CD8-positive, alpha-beta memory T cell (primary cell): ENCODE measurements at regions of chr5 and their contacts with region 1.

Region 1: DNA sequence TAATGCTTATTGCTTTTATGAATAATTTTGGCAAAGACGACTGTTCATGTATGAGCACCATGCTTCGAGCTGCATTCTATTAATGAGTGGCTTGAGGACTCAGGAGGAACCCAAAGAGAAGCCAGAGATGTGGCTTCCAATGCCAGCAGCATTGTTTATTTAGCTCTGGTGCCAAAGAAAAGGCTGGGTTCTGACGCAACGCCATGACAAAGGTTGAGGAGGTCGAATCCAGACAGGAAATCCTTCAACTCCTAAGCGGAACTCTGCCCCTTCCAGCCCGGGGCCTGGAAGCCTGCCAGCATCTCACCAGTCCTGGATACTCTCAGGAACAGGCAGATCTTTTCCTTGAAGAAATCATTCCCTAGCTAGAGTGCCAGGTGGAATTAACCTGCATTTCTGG is 104.4 kb downstream of the ARHGAP26 start:
- DNase-seq: no peak
- H3K4me3 ChIP-seq: no peak overlapping the region
- H3K4me3 Mint-ChIP-seq: no peak overlapping the region
- H3K27ac ChIP-seq: no peak overlapping the region
- H3K27ac Mint-ChIP-seq: peak overlapping the region in 1 of 8 donors; percentile 4
- H3K4me1 ChIP-seq: no peaks in the 10 kb centered on the region
- H3K4me1 Mint-ChIP-seq: peaks cover 30 to 35% (median 30%) of the 10 kb centered on the region in 3 donors
- H3K27me3 ChIP-seq: no peaks in the 10 kb centered on the region
- H3K27me3 Mint-ChIP-seq: no peaks in the 10 kb centered on the region

Region 2: DNA sequence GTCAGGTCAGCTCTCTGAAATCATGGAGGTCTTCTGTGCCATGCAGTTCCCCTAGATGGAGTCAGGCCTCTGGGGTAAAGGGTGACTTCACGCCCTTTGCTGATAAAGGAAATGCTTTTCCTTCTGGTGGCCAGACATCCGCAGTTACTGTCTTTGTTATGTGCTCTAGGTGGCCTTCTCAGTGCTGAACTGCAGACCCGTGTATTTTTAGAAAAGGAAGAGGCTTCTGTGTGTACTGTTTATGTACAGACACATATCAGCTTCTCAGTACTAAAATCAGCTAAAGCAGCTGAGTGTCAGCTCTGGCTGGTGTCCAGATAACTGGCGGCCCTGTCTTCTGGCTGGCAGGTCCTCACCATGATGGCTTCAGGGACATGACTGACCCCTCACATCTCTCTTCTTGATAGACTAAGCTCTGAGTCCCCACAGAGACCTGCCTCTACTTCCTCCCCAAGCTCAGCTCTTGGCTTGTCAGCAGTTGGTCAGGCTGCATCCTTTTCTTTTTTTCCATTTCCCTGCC is 29.1 kb before region 1 on chr5:
- CTCF ChIA-PET with region 1: no interaction called
- POLR2A ChIA-PET with region 1: no interaction called
- DNase-seq: peak in 2 of 5 donors; percentile 12 to 38
- H3K4me3 ChIP-seq: no peak overlapping the region
- H3K4me3 Mint-ChIP-seq: peak overlapping the region in 6 of 7 donors; percentile 47 to 79 (median 59)
- H3K27ac ChIP-seq: no peak overlapping the region
- H3K27ac Mint-ChIP-seq: peak overlapping the region; percentile 72 to 97 (median 90)
- H3K4me1 ChIP-seq: peaks cover 36% of the 10 kb centered on the region
- H3K4me1 Mint-ChIP-seq: peaks cover 85 to 97% (median 93%) of the 10 kb centered on the region in 3 donors
- H3K27me3 ChIP-seq: no peaks in the 10 kb centered on the region
- H3K27me3 Mint-ChIP-seq: no peaks in the 10 kb centered on the region

Region 3: DNA sequence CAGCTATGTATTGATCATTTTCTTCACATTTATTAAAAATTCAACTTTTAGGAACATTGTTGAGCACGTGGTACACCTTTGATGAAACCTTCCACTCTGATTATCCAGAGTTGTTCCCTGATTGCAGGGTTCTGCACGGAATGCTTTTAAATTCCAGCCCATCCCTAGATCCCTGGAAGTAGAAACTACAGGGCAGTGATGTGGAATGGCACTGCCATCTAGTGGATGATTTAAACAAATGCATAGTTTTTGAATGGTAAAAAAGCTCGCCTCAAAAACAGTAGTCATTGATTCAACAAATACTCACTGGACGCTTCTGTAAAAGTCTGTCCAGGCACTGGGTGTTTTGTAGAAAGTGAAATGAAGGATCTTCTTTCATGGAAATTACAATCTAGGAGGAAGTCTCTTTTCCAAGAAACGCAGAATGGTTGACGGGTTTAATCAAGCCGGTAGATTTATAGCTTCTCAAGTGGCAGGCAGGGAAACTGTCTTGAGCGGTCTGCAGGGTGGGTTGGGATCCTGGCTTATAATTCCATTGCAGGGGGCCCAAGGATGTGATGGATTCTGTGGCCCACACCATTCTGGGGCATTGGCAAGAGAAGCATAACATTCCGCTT is 14.0 kb after region 1 on chr5:
- CTCF ChIA-PET with region 1: interaction called, 39 read pairs
- POLR2A ChIA-PET with region 1: no interaction called
- DNase-seq: peak in 2 of 5 donors; percentile 9 to 21
- H3K4me3 ChIP-seq: no peak overlapping the region
- H3K4me3 Mint-ChIP-seq: no peak overlapping the region
- H3K27ac ChIP-seq: no peak overlapping the region
- H3K27ac Mint-ChIP-seq: peak overlapping the region in 2 of 8 donors; percentile 16 to 64
- H3K4me1 ChIP-seq: no peaks in the 10 kb centered on the region
- H3K4me1 Mint-ChIP-seq: peaks cover 39 to 47% (median 43%) of the 10 kb centered on the region in 3 donors
- H3K27me3 ChIP-seq: no peaks in the 10 kb centered on the region
- H3K27me3 Mint-ChIP-seq: no peaks in the 10 kb centered on the region

Region 4: DNA sequence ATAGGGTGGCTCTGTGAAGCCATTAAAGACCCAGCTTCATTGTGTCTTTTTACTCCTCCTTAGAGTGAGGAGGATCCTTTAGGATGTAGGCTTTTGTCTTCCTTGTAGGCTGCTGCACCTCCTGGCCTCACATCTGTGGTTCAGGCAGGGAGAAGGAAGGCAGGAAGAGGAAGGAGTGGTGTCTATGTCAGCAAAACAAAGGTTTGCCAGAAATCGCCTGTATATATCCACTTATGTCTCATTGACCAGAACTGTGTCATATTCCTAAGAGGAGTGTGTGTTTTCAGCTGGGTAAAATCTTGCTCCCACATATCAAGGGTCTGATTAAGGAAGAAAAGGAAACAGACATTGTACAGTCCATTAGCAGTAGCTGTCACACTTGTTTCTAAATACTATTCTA is 109.5 kb after region 1 on chr5:
- CTCF ChIA-PET with region 1: no interaction called
- POLR2A ChIA-PET with region 1: no interaction called
- DNase-seq: no peak
- H3K4me3 ChIP-seq: no peak overlapping the region
- H3K4me3 Mint-ChIP-seq: peak overlapping the region in 1 of 7 donors; percentile 37
- H3K27ac ChIP-seq: no peak overlapping the region
- H3K27ac Mint-ChIP-seq: peak overlapping the region; percentile 11 to 93 (median 76)
- H3K4me1 ChIP-seq: peaks cover 38% of the 10 kb centered on the region
- H3K4me1 Mint-ChIP-seq: peaks cover 65 to 73% (median 71%) of the 10 kb centered on the region in 3 donors
- H3K27me3 ChIP-seq: no peaks in the 10 kb centered on the region
- H3K27me3 Mint-ChIP-seq: no peaks in the 10 kb centered on the region